Caco-2 (cell line): ENCODE measurements at regions of chr5 and their contacts with region 1.

Region 1: DNA sequence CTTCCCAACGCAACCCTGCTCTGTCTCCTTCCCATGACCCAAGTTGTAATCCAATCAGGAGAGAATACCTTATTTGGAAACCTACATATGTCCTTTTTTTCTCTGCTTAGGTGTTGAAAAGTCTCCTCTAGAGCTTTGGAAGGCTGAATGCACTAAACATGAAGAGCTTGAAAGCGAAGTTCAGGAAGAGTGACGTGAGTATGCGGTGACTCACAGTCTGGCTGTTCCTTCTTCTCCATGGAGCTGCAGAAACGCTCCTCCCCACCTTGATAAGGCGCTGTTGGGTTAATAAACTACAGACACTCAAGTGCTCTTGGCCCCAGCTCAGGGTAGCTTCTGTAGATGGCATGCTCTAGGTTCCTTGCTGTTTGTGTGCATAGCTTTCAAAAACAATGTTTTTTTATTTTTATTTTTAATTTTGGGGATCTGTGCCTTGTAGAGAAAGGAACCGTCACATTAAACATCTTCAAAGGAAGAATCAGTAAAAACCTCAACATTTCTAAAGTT is 30.7 kb downstream of the RAI14 start:
- DNase-seq: peak; percentile 85 to 90
- H3K4me3 ChIP-seq: no peak overlapping the region
- H3K4me3 Mint-ChIP-seq: peak overlapping the region; percentile 67
- H3K27ac Mint-ChIP-seq: peak overlapping the region; percentile 88
- H3K4me1 ChIP-seq: peaks cover 53% of the 10 kb centered on the region
- H3K4me1 Mint-ChIP-seq: peaks cover 43% of the 10 kb centered on the region
- H3K27me3 ChIP-seq: no peaks in the 10 kb centered on the region
- H3K27me3 Mint-ChIP-seq: no peaks in the 10 kb centered on the region
- CTCF ChIP-seq: no peak

Region 2: GRCh38 chr5:34756781-34757624 is 70.2 kb after region 1 on chr5:
- CTCF ChIA-PET with region 1: interaction called, 4 read pairs
- POLR2A ChIA-PET with region 1: no interaction called
- intact Hi-C with region 1: loop called (anchors 1 kb)
- DNase-seq: peak; percentile 66 to 77
- H3K4me3 ChIP-seq: no peak overlapping the region
- H3K4me3 Mint-ChIP-seq: peak overlapping the region; percentile 40
- H3K27ac Mint-ChIP-seq: peak overlapping the region; percentile 50
- H3K4me1 ChIP-seq: peaks cover 22% of the 10 kb centered on the region
- H3K4me1 Mint-ChIP-seq: peaks cover 38% of the 10 kb centered on the region
- H3K27me3 ChIP-seq: no peaks in the 10 kb centered on the region
- H3K27me3 Mint-ChIP-seq: no peaks in the 10 kb centered on the region
- CTCF ChIP-seq: no peak